ENCODE measurements at regions of chr10 and their contacts with region 1.

Region 1: DNA sequence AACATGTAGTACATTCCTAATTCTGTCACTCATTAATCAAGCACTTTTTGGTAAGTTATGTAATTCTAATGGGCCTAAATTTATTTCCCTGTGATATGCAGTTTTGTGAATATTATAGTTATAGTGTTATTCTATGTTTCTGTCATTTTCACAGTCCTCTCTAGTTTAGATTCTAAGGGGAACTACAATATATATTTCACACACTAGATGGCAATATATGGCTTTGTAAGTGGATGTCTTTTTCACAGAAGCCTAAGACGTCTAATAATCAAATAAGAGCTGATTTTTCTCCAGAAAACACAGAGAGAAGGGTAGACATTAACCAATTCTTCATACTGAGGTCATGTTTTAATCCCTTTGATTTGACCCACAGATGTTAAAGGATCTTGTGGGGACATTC is 18.0 kb downstream of the RNLS start:
- DNase-seq: no peak
- H3K4me3 Mint-ChIP-seq: no peak overlapping the region
- H3K27ac Mint-ChIP-seq: no peak overlapping the region
- H3K4me1 Mint-ChIP-seq: no peaks in the 10 kb centered on the region
- H3K27me3 Mint-ChIP-seq: peaks cover 8% of the 10 kb centered on the region

Region 2: GRCh38 chr10:87945984-87946383 is 619.1 kb before region 1 on chr10:
- CTCF ChIA-PET with region 1: no interaction called
- POLR2A ChIA-PET with region 1: no interaction called
- DNase-seq: no peak
- H3K4me3 Mint-ChIP-seq: no peak overlapping the region
- H3K27ac Mint-ChIP-seq: no peak overlapping the region
- H3K4me1 Mint-ChIP-seq: no peaks in the 10 kb centered on the region
- H3K27me3 Mint-ChIP-seq: no peaks in the 10 kb centered on the region

Region 3: DNA sequence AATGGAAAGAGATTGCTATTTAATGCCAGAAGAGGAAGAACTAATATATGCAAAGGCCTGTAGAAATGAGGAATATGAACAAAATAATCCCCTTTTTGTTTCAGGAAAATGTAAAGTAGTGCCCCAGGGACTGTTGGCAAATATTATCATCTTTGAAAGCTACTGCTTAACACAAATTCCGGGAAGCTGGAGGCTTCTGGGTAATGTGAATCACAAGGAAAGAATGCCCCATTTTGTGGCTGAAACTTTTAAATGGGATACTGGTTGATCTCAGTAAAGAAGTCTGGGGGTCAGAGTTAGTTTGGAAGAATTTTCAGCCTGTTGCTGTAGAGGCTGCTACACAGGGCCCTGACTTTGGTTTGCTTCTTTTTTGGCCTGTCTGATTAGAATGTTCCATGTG is 560.6 kb before region 1 on chr10:
- CTCF ChIA-PET with region 1: no interaction called
- POLR2A ChIA-PET with region 1: interaction called, 15 read pairs
- DNase-seq: no peak
- H3K4me3 Mint-ChIP-seq: no peak overlapping the region
- H3K27ac Mint-ChIP-seq: no peak overlapping the region
- H3K4me1 Mint-ChIP-seq: no peaks in the 10 kb centered on the region
- H3K27me3 Mint-ChIP-seq: no peaks in the 10 kb centered on the region

Measured in activated CD4-positive, alpha-beta T cell treated with anti-CD3 and anti-CD28 coated beads, Interleukin-2, amount 10 ng/mL, durations not matched to agents 7 days and 5 days (primary cell).